Ascending aorta (tissue), 2 donors: ENCODE measurements at regions of chr2 and their contacts with region 1.

Region 1: DNA sequence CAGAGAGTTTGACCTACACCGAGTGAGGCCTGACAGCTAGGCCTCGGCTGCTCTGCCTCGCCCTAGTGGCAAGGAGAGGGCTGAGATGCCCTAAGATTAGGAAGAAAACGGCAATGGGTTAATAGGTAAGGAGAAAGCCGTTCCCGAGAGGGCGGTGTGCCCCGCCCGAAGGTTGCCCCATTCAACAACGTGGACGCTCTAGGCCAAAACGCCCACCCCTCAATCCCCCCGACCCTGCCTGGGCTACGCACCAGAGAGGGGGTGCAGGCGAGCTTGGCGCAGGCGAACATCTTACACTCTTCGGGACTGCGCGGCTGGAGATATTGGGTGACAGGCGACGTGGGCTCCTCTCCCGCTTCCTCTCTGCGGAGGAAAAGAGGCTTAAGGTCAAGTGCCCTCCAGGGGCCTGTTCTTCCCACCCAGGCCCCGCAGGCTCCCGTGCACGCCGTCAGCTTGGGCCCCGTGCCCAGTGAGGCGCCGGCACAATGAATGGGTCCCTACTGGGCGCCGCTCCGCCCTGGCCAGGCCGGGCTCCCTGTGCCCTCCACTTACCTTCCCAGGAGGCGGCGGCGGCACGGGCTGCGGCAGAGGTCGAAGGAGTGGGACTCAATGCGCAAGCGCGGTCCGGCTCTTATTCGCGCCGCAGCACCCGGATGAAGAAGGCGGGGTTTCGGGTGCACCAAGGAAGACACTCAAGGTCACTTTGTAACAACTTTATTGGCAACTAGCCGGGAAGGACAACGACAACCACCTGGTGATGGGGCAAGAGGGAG is at the start of gene ATP5MC3:
- DNase-seq: peak; percentile 76 to 95
- H3K4me3 ChIP-seq: peak within 1 kb of the TSS; percentile 86 to 89
- H3K27ac ChIP-seq: peak within 1 kb of the TSS; percentile 78 to 84
- H3K4me1 ChIP-seq: peaks cover 0 to 8% of the 10 kb centered on the region in 2 donors
- H3K27me3 ChIP-seq: no peaks in the 10 kb centered on the region
- CTCF ChIP-seq: peak in 1 of 3 experiments; percentile 13
- total RNA-seq, gene ATP5MC3: 25.5 TPM

Region 2: GRCh38 chr2:175342085-175342484 is 160.8 kb after region 1 on chr2:
- intact Hi-C with region 1: no loop called
- DNase-seq: no peak
- H3K4me3 ChIP-seq: no peak overlapping the region
- H3K27ac ChIP-seq: no peak overlapping the region
- H3K4me1 ChIP-seq: no peaks in the 10 kb centered on the region
- H3K27me3 ChIP-seq: no peaks in the 10 kb centered on the region
- CTCF ChIP-seq: no peak

Region 3: DNA sequence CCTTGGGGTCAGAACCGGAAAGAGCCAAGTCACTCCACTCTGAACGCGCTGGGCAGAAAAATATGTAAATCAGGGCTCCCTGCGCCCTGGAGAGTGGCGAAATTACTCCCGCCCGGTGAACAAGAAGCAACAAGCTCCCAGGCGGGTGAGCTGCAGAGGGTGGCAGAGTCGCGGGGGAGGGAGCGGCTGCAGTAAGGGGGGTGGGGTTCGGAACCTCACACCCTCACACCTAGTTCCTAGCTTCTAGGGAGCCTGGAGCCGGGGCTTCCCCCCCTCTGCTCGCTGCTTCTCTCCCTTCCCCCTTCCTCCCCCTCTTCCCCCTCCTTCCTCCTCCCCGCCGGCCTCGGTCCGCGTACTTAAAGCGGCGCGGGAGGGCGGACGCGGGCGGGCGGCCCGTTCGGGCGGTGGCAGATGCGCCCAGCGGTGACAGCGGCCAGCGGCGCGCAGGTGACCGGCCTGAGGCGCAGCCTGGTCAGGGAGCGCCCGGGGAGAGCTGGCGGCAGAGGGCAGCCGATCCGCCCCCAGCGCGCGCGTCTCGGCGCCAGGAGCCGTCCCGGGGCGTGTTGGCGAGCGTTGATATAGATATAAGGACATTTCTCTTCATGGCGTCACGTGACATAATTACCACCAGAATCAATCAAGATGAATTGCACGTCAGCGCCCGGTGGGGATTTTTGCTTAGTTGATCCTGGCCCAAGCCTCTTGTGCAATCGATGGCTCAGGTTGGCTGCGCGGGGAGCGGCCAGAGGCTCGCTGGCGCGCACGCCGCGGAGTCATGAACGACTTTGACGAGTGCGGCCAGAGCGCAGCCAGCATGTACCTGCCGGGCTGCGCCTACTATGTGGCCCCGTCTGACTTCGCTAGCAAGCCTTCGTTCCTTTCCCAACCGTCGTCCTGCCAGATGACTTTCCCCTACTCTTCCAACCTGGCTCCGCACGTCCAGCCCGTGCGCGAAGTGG is 925.6 kb after region 1 on chr2 and contains the start of gene HOXD11:
- intact Hi-C with region 1: loop called (anchors 10 kb)
- DNase-seq: peak in 1 of 2 donors; percentile 63
- H3K4me3 ChIP-seq: peak within 1 kb of the TSS; percentile 34 to 52
- H3K27ac ChIP-seq: no peak within 1 kb of the TSS
- H3K4me1 ChIP-seq: peaks cover 0 to 20% of the 10 kb centered on the region in 2 donors
- H3K27me3 ChIP-seq: peaks cover 60% of the 10 kb centered on the region
- CTCF ChIP-seq: no peak
- total RNA-seq, gene HOXD11: not detected